GM18951 (cell line): ENCODE measurements at regions of chr1 and their contacts with region 1.

Region 1: DNA sequence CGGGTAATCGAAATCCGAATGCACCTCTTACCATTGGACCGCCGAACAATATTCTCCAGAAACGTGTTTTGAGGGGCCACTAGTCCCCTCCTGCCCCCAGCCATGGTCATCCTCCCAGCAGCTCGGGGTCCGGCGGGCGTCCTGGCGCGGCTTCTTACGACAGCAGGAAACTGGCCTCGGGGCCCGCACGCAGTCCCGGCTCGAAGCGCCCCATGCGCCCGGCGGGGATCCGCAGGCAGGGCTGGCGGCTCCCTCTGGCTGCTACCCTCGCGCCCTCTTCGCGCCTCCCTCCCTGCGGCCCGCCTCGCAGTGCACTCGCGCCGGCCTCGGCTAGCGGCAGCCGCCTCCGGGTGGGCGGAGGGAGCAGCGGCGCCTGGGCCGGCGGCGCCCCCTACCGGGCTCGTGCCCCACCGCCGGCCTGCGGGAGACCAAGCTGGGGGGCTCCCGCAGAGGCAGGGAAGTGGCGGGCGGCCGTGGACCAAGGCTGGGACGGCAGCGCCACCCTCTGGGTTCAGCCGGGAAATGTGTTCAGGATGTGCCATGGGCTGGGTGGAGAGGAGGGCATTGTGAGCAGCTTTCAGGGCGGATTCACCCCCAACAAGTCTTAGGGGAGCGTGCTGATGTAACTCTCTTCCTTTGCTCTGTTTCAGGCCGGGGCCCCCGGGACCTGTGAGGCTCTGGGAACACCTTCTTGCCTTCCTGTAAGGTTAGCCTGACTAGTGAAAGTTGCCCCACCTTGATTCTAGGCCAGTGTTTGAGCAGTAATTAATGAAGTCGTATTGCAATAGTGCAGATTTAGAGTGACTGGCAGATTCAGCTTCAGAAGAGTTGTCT is at the start of gene KCNH1:
- POLR2A ChIP-seq: no peak

Region 2: GRCh38 chr1:210464519-210465039 is 669.5 kb before region 1 on chr1:
- in situ Hi-C with region 1: loop called (anchors 25 kb)
- POLR2A ChIP-seq: no peak

Region 3: DNA sequence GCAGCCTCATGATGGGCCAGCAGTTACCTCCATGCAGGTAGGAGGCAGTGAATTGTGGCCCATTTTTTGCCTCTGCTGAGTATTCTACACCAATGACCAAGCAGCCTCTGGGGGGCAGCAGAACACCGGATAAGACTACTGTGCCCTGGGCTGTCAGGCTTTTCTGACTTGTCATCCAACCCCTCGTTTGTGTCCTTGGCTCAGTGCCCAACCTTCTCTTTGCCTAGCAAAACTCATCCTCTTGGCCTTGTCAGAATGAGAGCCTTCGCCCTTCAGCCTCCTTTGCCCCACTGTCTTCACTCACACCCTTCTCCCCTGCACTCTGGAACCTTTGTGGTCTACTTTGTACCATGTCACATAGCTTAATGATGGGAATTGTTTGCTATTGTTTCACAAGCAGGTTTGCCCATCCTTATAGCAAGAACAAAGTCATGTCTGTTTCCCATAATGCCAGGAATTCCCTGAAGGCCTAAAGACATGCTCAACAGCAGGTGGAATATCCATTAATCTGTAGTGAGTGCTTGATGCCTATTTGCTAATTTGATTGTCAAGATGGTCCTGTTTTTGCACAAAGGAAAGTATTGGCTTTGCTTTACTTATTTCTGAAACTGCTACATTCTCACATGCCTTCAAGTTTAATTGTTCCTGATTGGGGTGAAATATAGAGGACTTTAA is 549.5 kb before region 1 on chr1:
- in situ Hi-C with region 1: loop called (anchors 25 kb)
- POLR2A ChIP-seq: no peak

Region 4: DNA sequence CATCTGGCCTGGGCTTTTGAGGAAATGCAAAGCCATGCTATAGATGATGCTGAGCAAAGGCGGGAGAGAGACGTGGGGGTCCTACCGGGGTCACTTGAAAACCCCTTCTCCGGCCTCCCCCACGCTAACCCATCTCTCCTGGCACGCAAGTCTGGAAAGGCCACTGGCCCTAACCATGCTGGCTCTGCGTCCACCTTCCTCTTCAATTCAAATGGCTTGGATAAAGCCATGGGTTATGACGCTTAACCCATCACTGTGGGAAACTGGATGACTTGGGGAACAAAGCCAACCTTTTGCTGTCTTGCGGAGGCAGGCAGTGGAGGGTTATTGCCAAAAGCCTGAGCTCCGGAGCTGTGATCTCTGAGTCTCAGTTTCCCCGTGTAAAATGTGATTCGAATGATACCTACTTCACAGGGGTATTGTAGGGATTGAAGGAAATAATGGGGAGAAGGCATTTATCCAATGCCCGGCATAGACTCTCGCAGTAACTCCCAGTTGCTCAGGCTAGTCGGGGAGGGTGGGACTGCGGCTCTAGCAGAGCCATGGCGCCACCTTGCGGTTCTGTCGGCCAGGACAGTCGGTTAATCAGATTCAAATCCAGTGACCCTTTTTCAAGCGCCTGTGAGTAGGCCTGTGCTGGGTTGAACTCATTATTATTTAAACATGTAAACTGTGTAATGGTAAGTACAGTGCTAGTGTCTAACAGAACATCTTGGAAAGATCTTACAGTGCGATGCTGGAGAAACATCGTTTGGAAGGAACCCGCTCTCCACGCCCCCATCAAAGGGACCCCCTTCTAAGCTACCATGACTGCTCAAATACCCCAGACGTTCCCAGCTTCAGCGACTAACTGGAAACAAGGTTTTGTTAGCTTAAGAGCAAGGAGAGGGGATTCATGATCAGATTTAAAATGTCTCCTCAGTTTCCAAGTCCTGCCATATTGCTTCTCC is 521.1 kb after region 1 on chr1:
- in situ Hi-C with region 1: no loop called
- POLR2A ChIP-seq: no peak